H1 (cell line): ENCODE measurements at regions of chr3 and their contacts with region 1.

Region 1: DNA sequence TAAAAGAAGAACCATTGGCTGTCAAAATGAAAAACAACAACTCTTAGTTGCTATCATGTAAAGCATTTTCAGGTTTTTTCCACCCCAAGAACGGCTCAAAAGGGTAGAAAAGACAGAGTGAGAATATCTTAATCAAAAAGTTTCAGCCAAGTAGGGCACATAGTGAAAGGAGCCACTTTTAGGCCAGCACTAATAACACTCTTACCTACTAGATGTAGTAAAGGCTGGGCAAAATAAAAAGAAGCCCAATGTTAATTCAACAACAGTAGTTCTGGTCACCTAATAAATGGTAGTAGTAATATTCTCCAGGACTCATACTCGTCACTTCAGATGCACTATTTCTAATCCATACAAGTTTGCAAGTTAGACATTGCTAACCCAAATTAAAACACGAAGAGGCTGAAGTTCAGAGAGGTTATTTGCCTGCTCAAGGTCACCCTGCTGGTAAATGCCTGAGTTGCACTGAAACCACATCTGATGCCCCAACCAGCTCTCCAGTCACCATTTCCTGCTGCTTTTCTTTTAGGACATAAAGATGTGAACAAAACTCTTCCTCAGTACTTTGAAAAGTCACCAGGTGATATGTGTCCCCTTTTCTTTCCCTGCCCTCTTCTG is 7.5 kb downstream of the GOLIM4 start:
- DNase-seq: no peak
- H3K4me3 ChIP-seq: no peak overlapping the region
- H3K27ac ChIP-seq: no peak overlapping the region
- H3K4me1 ChIP-seq: peaks cover 0 to 3% (median 3%) of the 10 kb centered on the region in 4 experiments; a peak in 3 of 7 replicates
- H3K27me3 ChIP-seq: no peaks in the 10 kb centered on the region
- CTCF ChIP-seq: peak; percentile 40 to 69 (median 51)
- EP300 ChIP-seq: no peak
- POLR2A ChIP-seq: no peak
- RAD21 ChIP-seq: peak; percentile 10 to 37; a peak in 2 of 4 replicates

Region 2: GRCh38 chr3:168047190-168047795 is 40.9 kb before region 1 on chr3:
- CTCF ChIA-PET with region 1: interaction called, 16 read pairs
- POLR2A ChIA-PET with region 1: no interaction called
- DNase-seq: no peak
- H3K4me3 ChIP-seq: no peak overlapping the region
- H3K27ac ChIP-seq: no peak overlapping the region
- H3K4me1 ChIP-seq: peaks cover 0 to 3% (median under 1%) of the 10 kb centered on the region in 4 experiments; a peak in 2 of 7 replicates
- H3K27me3 ChIP-seq: no peaks in the 10 kb centered on the region
- CTCF ChIP-seq: peak in 2 of 3 experiments; percentile 68 to 79; a peak in 2 of 4 replicates
- EP300 ChIP-seq: no peak
- POLR2A ChIP-seq: no peak
- RAD21 ChIP-seq: peak; percentile 85 to 86